A549 (cell line): ENCODE measurements at regions of chr16 and their contacts with region 1.

Region 1: DNA sequence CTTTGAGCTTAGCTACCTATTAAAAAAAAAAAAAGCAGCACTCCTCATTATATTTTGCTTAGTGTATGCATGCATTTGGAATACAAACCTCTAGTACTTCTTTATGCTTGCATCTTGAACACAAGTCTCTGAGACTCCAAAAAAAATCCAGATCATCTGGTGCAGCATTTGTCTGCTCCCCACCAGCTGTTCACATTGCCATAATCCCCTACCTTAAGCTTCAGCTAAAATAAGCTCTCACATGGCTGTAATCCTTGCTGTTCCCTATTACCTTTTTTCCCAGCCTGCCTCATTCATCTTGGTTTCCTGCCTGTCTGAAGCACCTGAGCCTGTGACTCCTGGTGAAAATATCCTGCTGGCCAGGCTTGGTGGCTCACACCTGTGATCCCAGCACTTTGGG is 7.5 kb upstream of the NFATC2IP start:
- DNase-seq: no peak
- ATAC-seq: no peak
- H3K4me3 ChIP-seq: no peak overlapping the region
- H3K27ac ChIP-seq: no peak overlapping the region
- H3K4me1 ChIP-seq: peaks cover 9% of the 10 kb centered on the region; the same call in 2 of the 3 replicates
- CTCF ChIP-seq: no peak
- EP300 ChIP-seq: no peak
- POLR2A ChIP-seq: no peak
- RAD21 ChIP-seq: no peak

Region 2: GRCh38 chr16:27879601-27880247 is 1063.6 kb before region 1 on chr16:
- CTCF ChIA-PET with region 1: no interaction called
- POLR2A ChIA-PET with region 1: no interaction called
- DNase-seq: no peak
- ATAC-seq: no peak
- H3K4me3 ChIP-seq: no peak overlapping the region
- H3K27ac ChIP-seq: no peak overlapping the region
- H3K4me1 ChIP-seq: no peaks in the 10 kb centered on the region
- CTCF ChIP-seq: no peak
- EP300 ChIP-seq: no peak
- POLR2A ChIP-seq: no peak
- RAD21 ChIP-seq: no peak

Region 3: GRCh38 chr16:28823872-28824716 is 119.2 kb before region 1 on chr16:
- CTCF ChIA-PET with region 1: interaction called, 13 read pairs
- POLR2A ChIA-PET with region 1: interaction called, 4 read pairs
- DNase-seq: peak; percentile 96 to 99
- ATAC-seq: peak; percentile 82 to 93
- H3K4me3 ChIP-seq: peak overlapping the region; percentile 100
- H3K27ac ChIP-seq: peak overlapping the region; percentile 95 to 100
- H3K4me1 ChIP-seq: peaks cover 37% of the 10 kb centered on the region
- CTCF ChIP-seq: no peak
- EP300 ChIP-seq: no peak
- POLR2A ChIP-seq: peak; percentile 32
- RAD21 ChIP-seq: no peak

Region 4: GRCh38 chr16:28846080-28846932 is 97.0 kb before region 1 on chr16 and contains the start of gene TUFM:
- CTCF ChIA-PET with region 1: interaction called, 44 read pairs
- POLR2A ChIA-PET with region 1: no interaction called
- DNase-seq: peak; percentile 97 to 99
- ATAC-seq: peak; percentile 88 to 96
- H3K4me3 ChIP-seq: peak within 1 kb of the TSS; percentile 74
- H3K27ac ChIP-seq: peak within 1 kb of the TSS; percentile 89 to 95
- H3K4me1 ChIP-seq: peaks cover 13% of the 10 kb centered on the region
- CTCF ChIP-seq: peak; percentile 34
- EP300 ChIP-seq: no peak
- POLR2A ChIP-seq: peak; percentile 76
- RAD21 ChIP-seq: peak; percentile 24 to 33; a peak in 3 of 5 replicates
- polyA plus RNA-seq, gene TUFM: 139 and 159 TPM in 2 replicates

Region 5: DNA sequence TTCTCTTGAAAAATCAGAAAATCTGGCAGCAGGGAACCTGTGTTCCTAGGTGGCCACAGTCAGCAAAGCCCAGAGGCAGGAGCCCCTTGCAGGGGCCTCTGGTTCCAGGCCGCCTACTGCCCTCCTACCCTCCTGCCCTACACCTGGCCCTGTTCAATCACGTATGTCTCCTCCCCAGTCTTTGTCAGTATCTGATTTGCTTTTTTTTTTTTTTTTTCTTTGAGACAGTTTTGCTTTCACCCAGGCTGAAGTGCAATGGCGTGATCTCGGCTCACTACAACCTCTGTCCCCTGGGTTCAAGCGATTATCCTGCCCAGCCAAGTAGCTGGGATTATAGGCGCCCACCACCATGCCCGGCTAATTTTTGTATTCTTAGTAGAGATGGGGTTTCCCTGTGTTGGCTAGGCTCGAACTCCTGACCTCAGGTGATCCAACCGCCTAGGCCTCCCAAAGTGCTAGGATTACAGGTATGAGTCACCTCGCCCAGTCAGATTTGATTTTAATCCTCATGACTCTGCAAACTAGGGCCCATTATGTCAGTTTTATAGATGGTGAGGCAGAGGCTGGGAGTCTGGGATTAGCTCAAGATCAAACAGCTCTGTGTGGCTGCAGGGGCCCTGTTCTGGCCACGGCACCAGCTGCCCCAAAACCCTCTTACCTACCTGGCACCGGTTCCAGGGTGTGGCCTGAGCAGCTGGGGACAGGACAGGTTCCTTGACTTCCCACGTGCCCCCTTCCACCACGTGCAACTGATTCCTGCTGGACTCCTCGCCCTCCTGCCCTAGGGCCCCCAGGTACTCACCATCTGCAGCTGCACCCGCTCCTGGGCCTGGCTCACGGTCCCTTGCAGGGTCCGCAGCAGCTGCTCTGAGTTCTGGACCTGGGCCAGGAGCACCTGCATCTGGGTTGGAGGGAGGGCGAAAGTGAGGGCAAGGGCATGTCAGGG is 32.9 kb before region 1 on chr16:
- CTCF ChIA-PET with region 1: interaction called, 55 read pairs
- POLR2A ChIA-PET with region 1: no interaction called
- DNase-seq: peak in 1 of 2 experiments; percentile 55
- ATAC-seq: peak; percentile 17 to 48; a peak in 3 of 6 replicates
- H3K4me3 ChIP-seq: no peak overlapping the region
- H3K27ac ChIP-seq: peak overlapping the region in 1 of 2 experiments; percentile 70; a peak in 3 of 6 replicates
- H3K4me1 ChIP-seq: peaks cover 9% of the 10 kb centered on the region; the same call in 1 of the 3 replicates
- CTCF ChIP-seq: no peak
- EP300 ChIP-seq: no peak
- POLR2A ChIP-seq: no peak
- RAD21 ChIP-seq: no peak

Region 6: DNA sequence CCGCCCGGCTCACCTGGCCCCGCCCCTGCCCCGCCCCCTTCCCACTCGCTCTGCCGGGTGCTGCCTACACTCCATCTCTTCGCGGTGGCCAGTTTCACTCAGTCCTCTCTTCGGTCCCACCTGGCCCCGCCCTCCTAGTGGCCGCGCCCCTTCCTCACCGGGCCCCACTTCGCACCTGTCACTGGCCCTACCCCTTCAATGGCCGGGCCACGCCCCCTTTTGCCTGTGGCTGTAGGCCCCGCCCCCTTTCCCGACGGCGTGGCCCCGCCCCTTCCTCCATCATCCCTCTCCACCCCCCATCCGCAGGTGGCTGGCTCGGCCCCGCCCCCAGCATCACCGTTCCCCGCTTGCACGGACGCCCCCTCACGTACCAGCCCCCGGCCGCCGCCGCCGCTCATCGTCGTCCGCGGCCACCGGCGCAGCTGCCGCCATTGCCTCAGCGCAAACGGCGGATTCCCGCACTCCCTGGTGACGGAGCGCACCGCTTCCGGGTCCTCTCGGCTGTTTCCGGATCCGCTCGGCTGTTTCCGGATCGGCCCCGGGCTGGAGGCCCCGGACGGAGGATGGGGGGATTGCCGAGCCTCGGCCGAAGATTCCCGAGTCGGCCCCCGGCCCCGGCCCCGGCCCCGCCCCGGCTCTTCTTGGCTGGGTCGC is 18.4 kb before region 1 on chr16 and contains the start of gene RABEP2:
- CTCF ChIA-PET with region 1: interaction called, 92 read pairs
- POLR2A ChIA-PET with region 1: interaction called, 6 read pairs
- DNase-seq: peak; percentile 89 to 97
- ATAC-seq: peak; percentile 89 to 94
- H3K4me3 ChIP-seq: peak within 1 kb of the TSS; percentile 60
- H3K27ac ChIP-seq: peak within 1 kb of the TSS; percentile 93
- H3K4me1 ChIP-seq: peaks cover 10% of the 10 kb centered on the region; the same call in 2 of the 3 replicates
- CTCF ChIP-seq: no peak
- EP300 ChIP-seq: no peak
- POLR2A ChIP-seq: 0 out of 2 replicates have a peak, but pooled peaks have one; percentile 10
- RAD21 ChIP-seq: no peak
- polyA plus RNA-seq, gene RABEP2: 5.4 and 6.0 TPM in 2 replicates

Region 7: GRCh38 chr16:28990375-28991040 is 47.2 kb after region 1 on chr16:
- CTCF ChIA-PET with region 1: no interaction called
- POLR2A ChIA-PET with region 1: no interaction called
- DNase-seq: no peak
- ATAC-seq: peak in 1 of 2 experiments; percentile 19; a peak in 1 of 6 replicates
- H3K4me3 ChIP-seq: no peak overlapping the region
- H3K27ac ChIP-seq: no peak overlapping the region
- H3K4me1 ChIP-seq: no peaks in the 10 kb centered on the region
- CTCF ChIP-seq: no peak
- EP300 ChIP-seq: no peak
- POLR2A ChIP-seq: no peak
- RAD21 ChIP-seq: no peak